ENCODE measurements at regions of chr19 and their contacts with region 1.

Region 1: DNA sequence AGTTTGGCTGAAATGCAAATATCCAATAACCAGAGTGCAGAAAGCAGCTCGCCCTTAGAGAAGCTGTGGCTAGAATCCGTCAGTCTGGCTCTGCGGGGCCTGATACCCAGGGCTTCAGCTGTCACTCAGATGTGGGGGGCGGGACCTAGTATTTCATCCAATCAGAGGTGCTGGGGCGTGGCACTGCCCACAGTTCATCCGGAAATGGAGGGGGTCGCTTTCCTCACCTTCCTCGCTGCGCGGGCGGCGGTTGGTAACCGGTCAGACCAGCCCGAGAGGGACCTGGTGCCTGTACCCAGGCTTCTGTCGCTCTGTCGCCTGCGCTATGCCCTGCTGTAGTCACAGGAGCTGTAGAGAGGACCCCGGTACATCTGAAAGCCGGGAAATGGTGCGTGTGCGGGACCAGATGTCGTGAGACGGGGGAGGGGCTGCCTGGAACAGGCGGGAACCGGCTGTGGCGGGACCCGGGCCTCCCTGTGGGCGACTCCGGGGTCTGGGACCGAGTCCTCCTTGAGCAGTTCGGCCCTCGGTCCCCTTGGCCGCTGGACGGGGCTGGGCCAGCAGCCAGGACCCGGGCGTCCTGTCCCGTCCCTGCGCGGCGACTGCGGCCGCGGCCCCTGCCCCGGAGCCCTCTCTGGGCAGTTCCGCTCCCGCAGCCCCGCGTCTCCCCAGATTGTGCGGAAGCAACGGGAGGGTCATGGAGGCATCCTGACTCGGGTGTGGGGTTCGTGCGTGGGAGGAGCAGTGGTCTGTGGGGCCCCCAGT is at the start of gene ZNF700:
- DNase-seq: peak; percentile 94 to 97
- H3K4me3 ChIP-seq: peak within 1 kb of the TSS; percentile 80 to 86
- H3K27ac ChIP-seq: peak within 1 kb of the TSS; percentile 86
- H3K4me1 ChIP-seq: peaks cover 33% of the 10 kb centered on the region
- H3K27me3 ChIP-seq: no peaks in the 10 kb centered on the region
- CTCF ChIP-seq: peak in 1 of 3 experiments; percentile 38
- POLR2A ChIP-seq: no peak
- total RNA-seq, gene ZNF700: 14.7 TPM

Region 2: GRCh38 chr19:11861301-11861700 is 63.8 kb before region 1 on chr19:
- intact Hi-C with region 1: no loop called
- DNase-seq: no peak
- H3K4me3 ChIP-seq: no peak overlapping the region
- H3K27ac ChIP-seq: no peak overlapping the region
- H3K4me1 ChIP-seq: no peaks in the 10 kb centered on the region
- H3K27me3 ChIP-seq: no peaks in the 10 kb centered on the region
- CTCF ChIP-seq: no peak
- POLR2A ChIP-seq: no peak

Region 3: GRCh38 chr19:11987405-11988281 is 62.6 kb after region 1 on chr19:
- intact Hi-C with region 1: loop called (anchors 5 kb)
- DNase-seq: peak in 1 of 2 donors; percentile 94
- H3K4me3 ChIP-seq: peak overlapping the region; percentile 52 to 77
- H3K27ac ChIP-seq: peak overlapping the region; percentile 76
- H3K4me1 ChIP-seq: peaks cover 5% of the 10 kb centered on the region
- H3K27me3 ChIP-seq: no peaks in the 10 kb centered on the region
- CTCF ChIP-seq: no peak
- POLR2A ChIP-seq: peak in 1 of 2 donors; percentile 42

Region 4: DNA sequence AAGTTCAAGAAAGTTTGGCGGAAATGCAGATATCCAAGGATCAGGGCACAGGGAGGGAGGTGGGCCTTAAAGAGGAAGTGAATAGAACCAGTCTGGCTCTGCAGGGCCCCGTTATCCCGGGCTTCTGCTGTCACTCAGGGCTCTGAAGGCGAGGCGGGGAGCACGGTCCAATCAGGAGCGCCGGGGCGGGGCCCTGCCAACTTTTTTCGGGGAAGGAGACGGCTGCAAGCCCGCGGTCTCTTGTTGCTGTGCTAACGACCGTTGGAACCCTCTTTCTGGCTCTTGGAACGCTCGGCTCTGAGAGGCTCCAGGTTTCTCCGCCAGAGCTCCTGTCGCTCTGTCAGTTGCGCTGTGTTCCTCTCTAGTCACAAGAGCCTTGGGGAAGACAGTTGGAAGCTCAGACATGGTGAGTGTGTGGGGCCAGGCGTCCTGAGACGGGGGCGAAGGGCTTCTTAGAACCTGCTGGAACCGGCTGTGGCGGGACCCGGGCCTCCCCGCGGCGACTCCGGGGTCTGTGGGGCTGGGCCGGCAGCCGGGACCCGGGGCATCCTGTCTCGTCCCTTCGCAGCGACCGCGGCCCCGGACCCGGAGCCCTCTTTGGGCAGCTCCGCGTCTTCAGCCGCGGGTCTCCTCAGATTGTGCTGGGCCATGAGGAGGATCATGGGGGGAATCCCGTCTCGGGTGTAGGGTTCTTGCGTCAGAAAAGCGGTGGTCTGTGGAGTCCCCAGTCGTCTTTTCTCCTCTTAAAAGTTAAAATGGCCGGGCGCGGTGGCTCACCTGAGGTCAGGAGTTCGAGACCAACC is 167.2 kb after region 1 on chr19:
- intact Hi-C with region 1: no loop called
- DNase-seq: no peak
- H3K4me3 ChIP-seq: peak overlapping the region; percentile 51 to 73
- H3K27ac ChIP-seq: peak overlapping the region; percentile 79
- H3K4me1 ChIP-seq: peaks cover 12% of the 10 kb centered on the region
- H3K27me3 ChIP-seq: no peaks in the 10 kb centered on the region
- CTCF ChIP-seq: no peak
- POLR2A ChIP-seq: no peak

Measured in vagina (tissue), 2 donors.